ENCODE measurements at regions of chr6 and their contacts with region 1.

Region 1: DNA sequence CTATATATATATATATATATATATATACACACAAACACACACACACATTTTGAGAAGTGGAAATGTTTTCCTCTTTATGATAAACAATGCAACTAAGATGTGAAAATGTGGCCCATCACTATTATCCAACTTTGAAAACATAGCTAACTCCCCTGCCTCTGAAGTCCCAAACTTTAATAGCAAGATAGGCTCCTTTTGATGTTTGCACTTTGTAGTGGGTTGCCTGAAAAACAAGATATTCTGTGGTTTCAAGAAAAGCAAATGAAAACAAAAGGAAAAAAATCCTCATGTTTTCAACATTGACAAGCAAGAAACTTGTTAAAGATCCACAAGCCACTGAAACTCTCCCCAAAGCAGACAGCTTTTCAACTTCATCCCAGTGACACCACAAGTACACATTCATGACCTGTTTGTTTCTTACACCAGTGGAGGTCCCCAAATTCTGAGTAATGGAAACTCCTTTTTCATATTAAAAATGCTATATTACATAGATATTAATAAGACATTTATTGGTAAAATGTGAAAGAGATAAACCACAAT is 90.0 kb downstream of the IPCEF1 start:
- DNase-seq: no peak
- H3K4me3 Mint-ChIP-seq: no peak overlapping the region
- H3K27ac Mint-ChIP-seq: peak overlapping the region; percentile 79
- H3K4me1 Mint-ChIP-seq: peaks cover 22% of the 10 kb centered on the region
- H3K27me3 Mint-ChIP-seq: peaks cover 5% of the 10 kb centered on the region

Region 2: GRCh38 chr6:154229786-154230185 is 36.8 kb before region 1 on chr6:
- intact Hi-C with region 1: loop called (anchors 1 kb)
- DNase-seq: peak; percentile 49
- H3K4me3 Mint-ChIP-seq: peak overlapping the region; percentile 46
- H3K27ac Mint-ChIP-seq: peak overlapping the region; percentile 47
- H3K4me1 Mint-ChIP-seq: peaks cover 57% of the 10 kb centered on the region
- H3K27me3 Mint-ChIP-seq: no peaks in the 10 kb centered on the region

Region 3: DNA sequence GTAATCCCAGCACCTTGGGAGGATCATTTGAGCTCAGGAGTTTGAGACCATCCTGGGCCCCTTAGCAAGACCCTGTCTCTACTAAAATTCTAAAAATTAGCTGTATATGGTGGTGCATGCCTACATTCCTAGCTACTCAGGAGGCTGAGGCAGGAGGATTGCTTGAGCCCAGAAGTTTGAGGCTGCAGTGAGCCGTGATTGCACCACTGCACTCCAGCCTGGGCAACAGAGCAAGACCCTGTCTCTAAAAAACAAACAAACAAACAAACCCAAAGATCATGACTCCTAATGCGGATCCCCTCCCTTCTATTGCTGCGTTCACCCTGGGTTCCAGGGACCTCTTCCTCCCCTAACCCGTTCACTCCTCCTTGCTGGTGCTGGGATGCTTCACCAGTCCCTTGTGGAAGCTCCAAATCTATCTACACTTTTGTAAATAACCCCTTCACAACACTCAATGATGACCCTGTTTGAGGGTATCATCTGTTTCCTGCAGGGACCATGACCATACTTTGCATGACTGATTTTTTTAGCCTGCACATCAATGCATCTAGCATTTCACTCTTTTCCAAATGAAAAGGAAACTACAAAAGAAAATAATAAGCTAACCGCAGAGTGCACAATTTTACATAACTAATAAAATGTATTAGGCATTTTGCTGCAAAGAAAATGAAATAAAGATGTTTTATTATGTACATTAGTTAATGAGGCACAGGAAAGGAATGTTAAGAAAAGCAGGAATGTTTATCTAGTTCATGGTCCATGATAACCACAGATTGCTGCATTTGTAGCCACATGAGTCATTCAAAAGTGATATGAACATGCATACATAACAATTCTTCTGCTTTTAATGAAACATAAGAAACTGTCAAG is 120.5 kb after region 1 on chr6:
- intact Hi-C with region 1: no loop called
- DNase-seq: no peak
- H3K4me3 Mint-ChIP-seq: no peak overlapping the region
- H3K27ac Mint-ChIP-seq: no peak overlapping the region
- H3K4me1 Mint-ChIP-seq: no peaks in the 10 kb centered on the region
- H3K27me3 Mint-ChIP-seq: peaks cover 5% of the 10 kb centered on the region